Activated B cell treated with CpG ODN at 0.5 μM for 24 hours (primary cell): ENCODE measurements at regions of chr19 and their contacts with region 1.

Region 1: GRCh38 chr19:17260842-17261325 is 3.7 kb downstream of the USHBP1 start:
- DNase-seq: peak; percentile 83
- ATAC-seq: peak; percentile 100
- H3K4me3 Mint-ChIP-seq: no peak overlapping the region
- H3K27ac Mint-ChIP-seq: no peak overlapping the region
- H3K4me1 Mint-ChIP-seq: peaks cover 11% of the 10 kb centered on the region
- H3K27me3 Mint-ChIP-seq: no peaks in the 10 kb centered on the region
- CTCF ChIP-seq: peak; percentile 74

Region 2: GRCh38 chr19:17245244-17245984 is 15.5 kb before region 1 on chr19 and contains the start of gene NR2F6:
- CTCF ChIA-PET with region 1: interaction called, 13 read pairs
- POLR2A ChIA-PET with region 1: interaction called, 4 read pairs
- intact Hi-C with region 1: loop called (anchors 2 kb)
- DNase-seq: no peak
- ATAC-seq: peak; percentile 39
- H3K4me3 Mint-ChIP-seq: peak within 1 kb of the TSS; percentile 92
- H3K27ac Mint-ChIP-seq: peak within 1 kb of the TSS; percentile 89
- H3K4me1 Mint-ChIP-seq: peaks cover 13% of the 10 kb centered on the region
- H3K27me3 Mint-ChIP-seq: no peaks in the 10 kb centered on the region
- CTCF ChIP-seq: no peak
- total RNA-seq, gene NR2F6: 4.3 and 4.6 TPM in 2 replicates

Region 3: DNA sequence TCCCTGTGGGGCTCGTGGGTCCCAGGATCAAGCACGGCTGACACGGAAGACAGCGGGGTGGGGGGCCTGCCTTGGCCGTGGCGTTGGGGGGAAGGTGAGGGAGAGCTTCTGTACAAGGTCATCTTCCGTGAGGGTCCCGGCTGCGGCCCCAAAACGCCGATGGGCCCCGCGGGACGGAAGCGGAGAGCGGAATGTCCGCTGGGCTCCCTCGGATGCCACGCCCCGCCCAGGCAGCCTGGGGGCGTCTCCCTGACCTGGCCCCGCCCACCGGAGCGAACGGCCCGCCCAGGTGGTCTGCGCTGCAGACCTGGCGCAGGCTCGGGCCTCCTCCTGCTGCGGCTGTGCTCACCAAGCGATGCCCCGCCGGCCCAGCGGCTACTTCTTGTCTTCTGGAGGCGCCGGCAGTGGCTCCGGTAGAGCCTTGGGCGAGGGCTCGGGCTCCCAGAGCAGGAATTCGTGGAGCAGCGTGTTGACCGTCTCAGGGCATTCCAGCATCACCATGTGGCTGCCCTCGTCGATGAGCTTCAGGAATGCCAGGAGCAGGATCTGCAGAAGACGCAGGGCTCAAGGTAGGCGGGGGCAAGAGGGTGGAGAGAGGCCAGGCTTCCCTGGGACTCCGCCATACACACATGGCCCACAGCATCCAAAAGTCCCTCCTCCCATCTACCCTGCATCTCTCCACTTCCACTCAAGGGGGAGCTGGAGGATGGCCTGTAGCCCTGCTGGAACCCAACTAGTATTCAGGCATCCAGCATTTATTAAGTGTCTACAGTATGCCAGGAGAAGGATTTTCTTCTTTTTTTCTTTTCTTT is 31.6 kb after region 1 on chr19:
- CTCF ChIA-PET with region 1: no interaction called
- POLR2A ChIA-PET with region 1: no interaction called
- intact Hi-C with region 1: no loop called
- DNase-seq: peak; percentile 90
- ATAC-seq: peak; percentile 91
- H3K4me3 Mint-ChIP-seq: peak overlapping the region; percentile 85
- H3K27ac Mint-ChIP-seq: peak overlapping the region; percentile 53
- H3K4me1 Mint-ChIP-seq: peaks cover 10% of the 10 kb centered on the region
- H3K27me3 Mint-ChIP-seq: peaks cover 2% of the 10 kb centered on the region
- CTCF ChIP-seq: no peak

Region 4: DNA sequence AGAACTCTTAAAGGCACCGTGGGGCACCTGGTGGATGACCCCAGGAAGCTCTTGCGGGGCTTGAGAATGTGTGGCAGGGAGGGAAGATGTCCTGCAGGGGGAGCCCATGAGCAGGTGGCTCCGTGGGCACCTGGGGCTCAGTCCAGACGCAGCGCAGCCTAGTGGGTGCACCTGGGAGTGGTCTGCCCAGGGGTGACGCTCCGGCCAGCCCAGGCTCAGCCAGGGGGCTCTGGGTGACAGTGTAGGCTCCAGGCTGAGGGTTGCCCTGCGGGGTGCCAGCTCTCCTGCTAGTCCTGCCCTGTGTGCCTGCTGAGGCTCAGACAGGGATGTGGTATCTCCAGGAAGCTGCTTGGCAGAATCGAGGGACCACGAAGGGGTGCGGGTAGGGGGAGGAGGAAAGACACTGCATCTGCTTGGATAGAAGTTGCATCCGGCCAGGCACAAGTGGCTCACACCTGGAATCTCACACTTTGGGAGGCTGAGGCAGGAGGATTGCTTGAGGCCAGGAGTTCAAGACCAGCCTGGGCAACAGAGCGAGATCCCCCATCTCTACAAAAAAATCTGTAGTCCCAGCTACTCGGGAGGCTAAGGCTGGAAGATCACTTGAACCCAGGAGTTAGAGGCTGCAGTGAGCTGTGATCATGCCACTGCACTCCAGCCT is 235.6 kb after region 1 on chr19:
- CTCF ChIA-PET with region 1: no interaction called
- POLR2A ChIA-PET with region 1: no interaction called
- intact Hi-C with region 1: no loop called
- DNase-seq: peak; percentile 76
- ATAC-seq: peak; percentile 100
- H3K4me3 Mint-ChIP-seq: no peak overlapping the region
- H3K27ac Mint-ChIP-seq: no peak overlapping the region
- H3K4me1 Mint-ChIP-seq: peaks cover 27% of the 10 kb centered on the region
- H3K27me3 Mint-ChIP-seq: no peaks in the 10 kb centered on the region
- CTCF ChIP-seq: no peak